Caco-2 (cell line): ENCODE measurements at regions of chr9 and their contacts with region 1.

Region 1: GRCh38 chr9:3732077-3733038 is 206.6 kb upstream of the RFX3 start:
- DNase-seq: peak; percentile 42 to 75
- H3K4me3 ChIP-seq: no peak overlapping the region
- H3K4me3 Mint-ChIP-seq: peak overlapping the region; percentile 33
- H3K27ac Mint-ChIP-seq: no peak overlapping the region
- H3K4me1 ChIP-seq: peaks cover 12% of the 10 kb centered on the region
- H3K4me1 Mint-ChIP-seq: peaks cover 10% of the 10 kb centered on the region
- H3K27me3 ChIP-seq: no peaks in the 10 kb centered on the region
- H3K27me3 Mint-ChIP-seq: peaks cover under 1% of the 10 kb centered on the region
- CTCF ChIP-seq: peak; percentile 49

Region 2: DNA sequence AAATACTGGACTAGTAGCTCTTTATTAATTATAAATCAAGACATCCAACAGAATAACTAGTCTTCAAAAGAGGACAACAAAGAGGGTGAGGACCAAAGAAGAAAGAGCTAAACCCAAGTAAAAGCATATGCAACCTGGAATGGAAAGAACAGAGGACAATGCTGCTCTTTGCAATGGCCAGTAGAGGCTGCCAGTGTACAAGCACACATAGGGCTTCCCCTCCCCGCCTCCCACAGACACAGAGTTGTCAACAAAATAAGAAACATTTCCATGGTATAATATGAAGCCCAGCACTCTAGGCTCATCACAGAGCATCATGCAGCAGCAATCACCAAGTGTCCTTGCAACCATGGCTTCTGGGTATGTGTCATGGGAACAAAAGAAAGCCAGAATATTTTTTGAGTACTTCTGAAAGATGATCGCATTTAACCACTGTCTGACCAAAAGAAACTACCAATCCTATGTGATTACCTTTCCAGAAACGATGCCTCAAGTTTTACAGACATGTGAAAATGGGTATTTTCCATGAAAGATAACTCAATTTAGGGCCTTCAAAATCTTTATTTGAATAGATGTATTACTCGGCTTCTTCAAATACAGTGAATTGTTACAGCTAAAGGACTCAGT is 264.7 kb before region 1 on chr9:
- CTCF ChIA-PET with region 1: interaction called, 3 read pairs
- POLR2A ChIA-PET with region 1: no interaction called
- intact Hi-C with region 1: loop called (anchors 5 kb)
- DNase-seq: peak; percentile 40
- H3K4me3 ChIP-seq: no peak overlapping the region
- H3K4me3 Mint-ChIP-seq: no peak overlapping the region
- H3K27ac Mint-ChIP-seq: no peak overlapping the region
- H3K4me1 ChIP-seq: no peaks in the 10 kb centered on the region
- H3K4me1 Mint-ChIP-seq: no peaks in the 10 kb centered on the region
- H3K27me3 ChIP-seq: no peaks in the 10 kb centered on the region
- H3K27me3 Mint-ChIP-seq: no peaks in the 10 kb centered on the region
- CTCF ChIP-seq: peak; percentile 60 to 90

Region 3: DNA sequence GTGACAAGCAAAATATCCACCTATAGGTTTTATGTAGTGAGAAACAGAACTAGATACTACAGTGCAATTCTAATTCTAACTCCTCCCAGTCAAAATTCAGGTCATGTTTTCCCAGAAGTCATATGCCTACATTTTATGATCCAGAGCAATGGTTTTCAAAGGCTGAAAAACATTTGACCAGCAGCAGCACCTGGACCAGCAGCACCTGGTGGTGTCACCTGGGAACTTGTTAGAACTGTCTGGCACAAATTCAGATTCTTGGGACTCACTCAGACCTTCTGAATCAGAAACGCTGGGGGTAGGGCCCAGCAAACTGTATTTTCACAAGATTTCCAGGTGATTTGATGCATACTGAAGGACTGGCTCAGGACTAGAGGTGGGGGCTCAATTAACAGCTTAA is 161.2 kb after region 1 on chr9:
- CTCF ChIA-PET with region 1: no interaction called
- POLR2A ChIA-PET with region 1: no interaction called
- intact Hi-C with region 1: loop called (anchors 1 kb)
- DNase-seq: peak; percentile 29 to 33
- H3K4me3 ChIP-seq: no peak overlapping the region
- H3K4me3 Mint-ChIP-seq: no peak overlapping the region
- H3K27ac Mint-ChIP-seq: no peak overlapping the region
- H3K4me1 ChIP-seq: 0 out of 2 replicates have a peak, but pooled peaks cover 4% of the 10 kb centered on the region
- H3K4me1 Mint-ChIP-seq: no peaks in the 10 kb centered on the region
- H3K27me3 ChIP-seq: no peaks in the 10 kb centered on the region
- H3K27me3 Mint-ChIP-seq: no peaks in the 10 kb centered on the region
- CTCF ChIP-seq: peak in 1 of 2 experiments; percentile 45

Region 4: DNA sequence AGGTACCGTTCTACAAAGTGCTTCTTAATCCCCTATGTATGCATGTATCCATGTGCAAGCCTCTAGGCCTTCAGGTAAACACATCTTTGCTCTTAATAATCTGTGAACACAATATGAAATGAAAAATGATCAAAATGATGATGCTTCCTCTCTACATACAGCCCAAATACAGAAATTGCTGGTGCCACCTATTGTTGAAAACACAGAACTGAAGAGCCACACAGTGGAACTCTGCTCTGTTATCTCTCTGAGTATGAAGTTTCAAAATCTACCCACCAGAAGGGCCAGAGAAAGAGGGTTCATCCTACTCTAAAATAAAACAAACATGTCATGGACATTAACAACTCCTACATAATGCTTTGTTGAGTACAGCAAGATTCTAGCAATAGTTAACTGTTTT is 496.2 kb after region 1 on chr9:
- CTCF ChIA-PET with region 1: interaction called, 5 read pairs
- POLR2A ChIA-PET with region 1: no interaction called
- intact Hi-C with region 1: loop called (anchors 1 kb)
- DNase-seq: peak in 1 of 2 experiments; percentile 11
- H3K4me3 ChIP-seq: no peak overlapping the region
- H3K4me3 Mint-ChIP-seq: no peak overlapping the region
- H3K27ac Mint-ChIP-seq: no peak overlapping the region
- H3K4me1 ChIP-seq: peaks cover 21% of the 10 kb centered on the region
- H3K4me1 Mint-ChIP-seq: peaks cover 2% of the 10 kb centered on the region
- H3K27me3 ChIP-seq: no peaks in the 10 kb centered on the region
- H3K27me3 Mint-ChIP-seq: no peaks in the 10 kb centered on the region
- CTCF ChIP-seq: peak in 1 of 2 experiments; percentile 44

Region 5: GRCh38 chr9:4366591-4367330 is 634.4 kb after region 1 on chr9:
- CTCF ChIA-PET with region 1: interaction called, 3 read pairs
- POLR2A ChIA-PET with region 1: no interaction called
- intact Hi-C with region 1: loop called (anchors 1 kb)
- DNase-seq: peak; percentile 38 to 53
- H3K4me3 ChIP-seq: no peak overlapping the region
- H3K4me3 Mint-ChIP-seq: no peak overlapping the region
- H3K27ac Mint-ChIP-seq: no peak overlapping the region
- H3K4me1 ChIP-seq: no peaks in the 10 kb centered on the region
- H3K4me1 Mint-ChIP-seq: no peaks in the 10 kb centered on the region
- H3K27me3 ChIP-seq: no peaks in the 10 kb centered on the region
- H3K27me3 Mint-ChIP-seq: no peaks in the 10 kb centered on the region
- CTCF ChIP-seq: peak; percentile 62 to 69